ENCODE measurements at regions of chr12 and their contacts with region 1.

Region 1: GRCh38 chr12:4153343-4153892 is 120.1 kb upstream of the CCND2 start:
- DNase-seq: peak; percentile 78
- H3K4me3 Mint-ChIP-seq: peak overlapping the region; percentile 63
- H3K27ac Mint-ChIP-seq: peak overlapping the region; percentile 94
- H3K4me1 Mint-ChIP-seq: peaks cover 88% of the 10 kb centered on the region
- H3K27me3 Mint-ChIP-seq: no peaks in the 10 kb centered on the region

Region 2: DNA sequence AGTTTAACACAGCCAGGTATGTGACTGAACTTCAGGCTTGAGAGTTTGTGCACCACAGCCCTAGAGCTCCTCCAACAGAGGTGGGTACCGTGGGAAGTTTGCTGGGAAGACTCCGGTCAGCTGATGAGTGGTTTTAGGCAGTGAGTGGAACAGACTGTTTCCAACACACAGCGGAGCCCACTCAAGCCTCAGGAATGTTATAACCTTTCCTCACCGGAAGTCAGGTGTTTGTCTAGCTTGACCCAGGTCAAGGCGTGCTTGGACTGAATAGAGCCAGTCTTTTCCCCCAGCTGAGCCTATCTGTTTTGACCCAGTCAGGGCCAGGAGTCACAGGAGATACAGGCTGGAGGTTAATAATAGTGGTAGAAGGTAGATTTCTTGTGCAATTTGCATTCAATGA is 141.8 kb before region 1 on chr12:
- intact Hi-C with region 1: no loop called
- DNase-seq: no peak
- H3K4me3 Mint-ChIP-seq: no peak overlapping the region
- H3K27ac Mint-ChIP-seq: no peak overlapping the region
- H3K4me1 Mint-ChIP-seq: no peaks in the 10 kb centered on the region
- H3K27me3 Mint-ChIP-seq: peaks cover 6% of the 10 kb centered on the region

Region 3: GRCh38 chr12:4112734-4113325 is 40.6 kb before region 1 on chr12:
- intact Hi-C with region 1: loop called (anchors 1 kb)
- DNase-seq: no peak
- H3K4me3 Mint-ChIP-seq: no peak overlapping the region
- H3K27ac Mint-ChIP-seq: peak overlapping the region; percentile 50
- H3K4me1 Mint-ChIP-seq: peaks cover 83% of the 10 kb centered on the region
- H3K27me3 Mint-ChIP-seq: no peaks in the 10 kb centered on the region

Region 4: GRCh38 chr12:4164559-4165558 is 11.4 kb after region 1 on chr12:
- intact Hi-C with region 1: loop called (anchors 1 kb)
- DNase-seq: peak; percentile 67
- H3K4me3 Mint-ChIP-seq: peak overlapping the region; percentile 88
- H3K27ac Mint-ChIP-seq: peak overlapping the region; percentile 99
- H3K4me1 Mint-ChIP-seq: peaks cover 68% of the 10 kb centered on the region
- H3K27me3 Mint-ChIP-seq: no peaks in the 10 kb centered on the region

Region 5: GRCh38 chr12:4265280-4265679 is 111.9 kb after region 1 on chr12:
- intact Hi-C with region 1: no loop called
- DNase-seq: no peak
- H3K4me3 Mint-ChIP-seq: no peak overlapping the region
- H3K27ac Mint-ChIP-seq: no peak overlapping the region
- H3K4me1 Mint-ChIP-seq: peaks cover 21% of the 10 kb centered on the region
- H3K27me3 Mint-ChIP-seq: peaks cover 12% of the 10 kb centered on the region